ENCODE measurements at regions of chr7 and their contacts with region 1.

Region 1: DNA sequence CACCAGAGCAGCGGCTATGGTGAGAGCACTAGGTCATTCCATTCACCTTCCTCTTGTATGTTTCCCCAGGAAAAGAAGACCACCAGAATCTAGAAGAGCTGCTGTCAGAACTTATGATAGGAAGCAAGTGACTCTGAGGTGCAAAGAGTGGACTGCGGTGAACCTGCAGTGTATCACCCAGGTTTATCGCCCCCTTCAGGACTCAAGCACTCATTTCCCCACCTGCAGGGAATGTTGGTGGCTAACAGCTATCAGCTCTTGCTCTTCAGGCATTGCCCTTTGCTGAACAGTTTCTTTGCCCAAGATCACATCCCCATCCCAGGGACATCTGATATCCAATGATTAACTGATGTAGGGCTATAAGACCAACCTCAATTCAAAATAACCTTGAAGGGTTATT is 66.3 kb upstream of the IL6 start:
- DNase-seq: no peak
- H3K4me3 ChIP-seq: no peak overlapping the region
- H3K27ac ChIP-seq: no peak overlapping the region
- H3K4me1 ChIP-seq: peaks cover 0 to 3% (median 0%) of the 10 kb centered on the region in 4 experiments; a peak in 1 of 7 replicates
- H3K27me3 ChIP-seq: no peaks in the 10 kb centered on the region
- CTCF ChIP-seq: peak; percentile 74 to 90 (median 86)
- EP300 ChIP-seq: no peak
- POLR2A ChIP-seq: no peak
- RAD21 ChIP-seq: peak; percentile 40 to 66

Region 2: DNA sequence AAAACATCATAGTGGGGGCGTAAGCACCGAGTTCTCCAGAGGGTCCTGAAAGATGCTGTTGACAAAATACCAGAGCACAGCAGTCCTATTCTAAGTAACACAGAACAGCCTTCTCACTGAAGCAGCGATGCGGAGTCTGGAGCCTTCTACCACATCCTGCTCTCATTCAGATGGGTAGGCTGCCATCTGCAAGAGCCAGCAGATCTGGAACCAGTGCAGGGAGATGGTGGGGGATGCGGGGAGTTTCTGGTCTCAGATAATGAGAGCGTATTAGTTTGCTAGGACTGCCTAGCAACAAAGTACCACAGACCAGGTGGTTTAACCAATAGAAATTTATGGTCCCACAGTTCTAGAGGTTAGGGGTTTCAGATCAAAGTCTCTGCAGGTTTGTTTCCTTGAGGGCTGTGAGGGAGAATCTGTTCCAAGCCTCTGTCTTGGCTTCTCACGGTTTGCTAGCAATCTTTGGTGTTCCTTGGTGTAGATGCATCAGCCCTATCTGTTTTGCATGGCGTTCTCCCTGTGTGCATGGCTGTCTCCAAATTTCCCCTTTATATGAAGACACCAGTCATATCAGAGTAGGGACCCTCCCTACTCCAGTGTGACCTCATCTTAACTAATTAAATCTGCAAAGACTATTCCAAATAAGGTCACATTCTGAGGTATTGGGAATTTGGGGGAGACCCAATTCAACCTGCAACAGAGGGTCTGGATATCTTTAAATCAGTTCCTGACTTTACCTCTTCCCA is 108.8 kb before region 1 on chr7:
- CTCF ChIA-PET with region 1: interaction called, 11 read pairs
- POLR2A ChIA-PET with region 1: no interaction called
- DNase-seq: peak in 1 of 2 experiments; percentile 39
- H3K4me3 ChIP-seq: no peak overlapping the region
- H3K27ac ChIP-seq: no peak overlapping the region
- H3K4me1 ChIP-seq: peaks cover 0 to 7% (median 4%) of the 10 kb centered on the region in 4 experiments; a peak in 4 of 7 replicates
- H3K27me3 ChIP-seq: no peaks in the 10 kb centered on the region
- CTCF ChIP-seq: no peak
- EP300 ChIP-seq: no peak
- POLR2A ChIP-seq: no peak
- RAD21 ChIP-seq: no peak

Region 3: DNA sequence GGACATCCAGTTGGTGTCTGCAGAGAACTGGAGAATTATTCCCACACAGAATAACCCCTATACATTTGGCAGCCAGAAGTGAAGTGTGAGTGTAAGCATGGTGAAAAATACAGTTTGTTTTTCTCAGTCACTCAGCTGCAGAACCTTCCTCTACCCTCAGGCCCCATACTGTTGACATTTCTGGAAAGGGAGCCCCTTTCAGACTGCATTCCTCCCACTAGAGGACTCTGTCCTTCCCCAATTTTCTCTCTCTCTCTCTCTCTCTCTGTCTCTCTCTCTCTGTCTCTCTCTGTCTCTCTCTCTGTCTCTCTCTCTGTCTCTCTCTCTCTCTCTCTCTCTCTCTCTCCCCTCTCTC is 74.0 kb before region 1 on chr7:
- CTCF ChIA-PET with region 1: interaction called, 10 read pairs
- POLR2A ChIA-PET with region 1: interaction called, 5 read pairs
- DNase-seq: no peak
- H3K4me3 ChIP-seq: no peak overlapping the region
- H3K27ac ChIP-seq: no peak overlapping the region
- H3K4me1 ChIP-seq: peaks cover 4 to 22% (median 13%) of the 10 kb centered on the region in 4 experiments; a peak in 6 of 7 replicates
- H3K27me3 ChIP-seq: no peaks in the 10 kb centered on the region
- CTCF ChIP-seq: peak; percentile 10 to 64 (median 52)
- EP300 ChIP-seq: 0 out of 3 replicates have a peak, but pooled peaks of 1 of the 2 experiments have one; percentile 31
- POLR2A ChIP-seq: no peak
- RAD21 ChIP-seq: peak; percentile 43 to 55; a peak in 3 of 4 replicates

Region 4: GRCh38 chr7:22647451-22648257 is 13.1 kb before region 1 on chr7:
- CTCF ChIA-PET with region 1: interaction called, 15 read pairs
- POLR2A ChIA-PET with region 1: no interaction called
- DNase-seq: no peak
- H3K4me3 ChIP-seq: no peak overlapping the region
- H3K27ac ChIP-seq: no peak overlapping the region
- H3K4me1 ChIP-seq: no peaks in the 10 kb centered on the region
- H3K27me3 ChIP-seq: no peaks in the 10 kb centered on the region
- CTCF ChIP-seq: no peak
- EP300 ChIP-seq: no peak
- POLR2A ChIP-seq: no peak
- RAD21 ChIP-seq: no peak

Region 5: GRCh38 chr7:22677680-22678079 is 16.9 kb after region 1 on chr7:
- CTCF ChIA-PET with region 1: interaction called, 11 read pairs
- POLR2A ChIA-PET with region 1: no interaction called
- DNase-seq: no peak
- H3K4me3 ChIP-seq: no peak overlapping the region
- H3K27ac ChIP-seq: no peak overlapping the region
- H3K4me1 ChIP-seq: no peaks in the 10 kb centered on the region; a peak in 1 of 7 replicates
- H3K27me3 ChIP-seq: no peaks in the 10 kb centered on the region
- CTCF ChIP-seq: no peak
- EP300 ChIP-seq: no peak
- POLR2A ChIP-seq: no peak
- RAD21 ChIP-seq: no peak

Region 6: DNA sequence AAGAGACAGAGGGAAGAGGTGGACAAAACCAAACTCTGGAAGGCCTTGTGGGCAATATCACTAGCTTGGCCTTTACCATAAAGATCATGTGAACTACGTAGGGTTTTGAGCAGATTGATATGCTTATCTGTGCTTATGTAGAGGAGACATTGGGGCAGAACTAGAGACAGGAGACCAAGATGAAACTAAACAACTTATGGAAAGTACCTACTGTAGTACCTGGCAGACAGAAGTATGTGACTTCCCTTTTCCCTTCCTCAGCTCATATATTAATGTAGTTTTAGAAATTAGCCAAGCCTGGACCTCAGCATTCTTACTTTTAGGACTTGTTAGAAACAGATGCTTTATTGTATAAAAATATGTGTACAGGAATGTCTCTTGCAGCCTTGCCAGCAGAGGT is 52.3 kb after region 1 on chr7:
- CTCF ChIA-PET with region 1: interaction called, 17 read pairs
- POLR2A ChIA-PET with region 1: interaction called, 4 read pairs
- DNase-seq: no peak
- H3K4me3 ChIP-seq: no peak overlapping the region
- H3K27ac ChIP-seq: no peak overlapping the region
- H3K4me1 ChIP-seq: peaks cover 4 to 9% (median 5%) of the 10 kb centered on the region in 4 experiments; a peak in 6 of 7 replicates
- H3K27me3 ChIP-seq: no peaks in the 10 kb centered on the region
- CTCF ChIP-seq: no peak
- EP300 ChIP-seq: no peak
- POLR2A ChIP-seq: no peak
- RAD21 ChIP-seq: no peak